ENCODE measurements at regions of chr14 and their contacts with region 1.

Region 1: GRCh38 chr14:65949711-65950516 is 536.3 kb upstream of the CCDC196 start:
- DNase-seq: peak in 6 of 14 experiments; percentile 12 to 56 (median 31)
- ATAC-seq: no peak
- H3K4me3 ChIP-seq: no peak overlapping the region
- H3K4me3 Mint-ChIP-seq: no peak overlapping the region
- H3K27ac ChIP-seq: no peak overlapping the region
- H3K27ac Mint-ChIP-seq: no peak overlapping the region
- H3K4me1 ChIP-seq: peaks cover 25% of the 10 kb centered on the region
- H3K4me1 Mint-ChIP-seq: peaks cover 32% of the 10 kb centered on the region
- H3K27me3 ChIP-seq: no peaks in the 10 kb centered on the region
- H3K27me3 Mint-ChIP-seq: no peaks in the 10 kb centered on the region
- CTCF ChIP-seq: no peak

Region 2: DNA sequence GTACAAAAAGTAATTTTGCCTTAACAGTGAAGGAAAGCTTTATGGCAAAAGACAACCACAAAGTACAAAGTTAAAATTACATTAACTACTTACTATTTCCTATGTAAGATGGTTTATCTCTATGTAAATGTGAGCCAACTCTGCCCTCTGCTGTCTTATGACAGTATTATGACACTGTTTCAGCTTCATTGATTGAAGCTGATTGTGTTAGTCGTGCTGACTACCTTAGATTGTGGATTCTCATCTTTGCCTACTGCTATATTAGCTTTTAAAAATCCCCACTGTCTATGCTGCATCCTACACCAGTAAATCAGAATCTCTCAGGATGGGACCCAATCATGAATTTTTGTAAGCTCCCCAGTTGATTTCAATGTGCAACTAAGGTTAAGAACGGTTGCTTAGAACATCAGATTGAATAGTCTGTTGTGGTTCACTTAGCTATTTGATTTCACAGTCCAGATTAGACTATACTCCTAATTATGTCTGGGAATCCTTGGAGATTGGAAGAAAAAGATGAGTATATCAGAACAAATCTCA is 1058.0 kb before region 1 on chr14:
- CTCF ChIA-PET with region 1: no interaction called
- POLR2A ChIA-PET with region 1: no interaction called
- intact Hi-C with region 1: no loop called
- DNase-seq: peak in 8 of 14 experiments; percentile 11 to 81 (median 37)
- ATAC-seq: peak; percentile 97
- H3K4me3 ChIP-seq: no peak overlapping the region
- H3K4me3 Mint-ChIP-seq: no peak overlapping the region
- H3K27ac ChIP-seq: no peak overlapping the region
- H3K27ac Mint-ChIP-seq: no peak overlapping the region
- H3K4me1 ChIP-seq: no peaks in the 10 kb centered on the region
- H3K4me1 Mint-ChIP-seq: peaks cover 5% of the 10 kb centered on the region
- H3K27me3 ChIP-seq: peaks cover 0 to 4% of the 10 kb centered on the region in 2 experiments
- H3K27me3 Mint-ChIP-seq: peaks cover 13% of the 10 kb centered on the region
- CTCF ChIP-seq: peak; percentile 72

Region 3: DNA sequence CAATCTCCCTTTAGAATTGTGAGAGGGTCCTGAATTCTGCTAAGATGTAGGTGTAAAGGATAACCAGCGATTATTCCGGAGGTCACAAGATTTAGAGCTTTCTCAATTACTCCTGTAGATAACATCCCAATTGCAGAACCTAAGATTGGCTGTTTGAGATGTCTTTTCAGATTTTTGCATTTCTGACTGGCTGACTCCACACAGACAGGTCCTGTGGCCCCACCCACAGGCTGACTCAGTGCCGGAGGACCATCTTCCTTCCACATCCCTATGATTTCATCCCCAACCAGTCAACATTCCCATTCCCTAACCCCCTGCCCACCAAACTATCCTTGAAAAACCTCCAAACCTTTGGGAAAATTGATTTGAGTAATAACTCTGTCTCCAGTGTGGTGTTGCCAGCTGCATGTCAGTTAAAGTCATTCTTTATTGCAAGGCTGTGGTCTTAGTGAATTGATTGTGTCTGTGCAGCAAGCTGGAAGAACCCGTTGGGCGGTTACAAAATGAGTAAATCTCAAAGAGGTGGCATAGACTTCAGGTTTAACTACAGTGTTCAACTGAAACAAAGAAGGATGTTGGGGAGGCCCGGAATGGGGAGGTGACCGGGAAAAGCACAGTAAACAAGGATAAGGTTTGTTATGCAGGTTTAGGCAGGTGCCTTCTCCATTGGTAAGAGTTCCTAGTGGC is 952.7 kb before region 1 on chr14:
- CTCF ChIA-PET with region 1: no interaction called
- POLR2A ChIA-PET with region 1: no interaction called
- intact Hi-C with region 1: loop called in 1 of 2 experiments (anchors 10 kb)
- DNase-seq: peak in 2 of 14 experiments; percentile 27 to 30
- ATAC-seq: peak; percentile 71
- H3K4me3 ChIP-seq: no peak overlapping the region
- H3K4me3 Mint-ChIP-seq: peak overlapping the region; percentile 9
- H3K27ac ChIP-seq: no peak overlapping the region
- H3K27ac Mint-ChIP-seq: no peak overlapping the region
- H3K4me1 ChIP-seq: peaks cover 4% of the 10 kb centered on the region
- H3K4me1 Mint-ChIP-seq: peaks cover 10% of the 10 kb centered on the region
- H3K27me3 ChIP-seq: no peaks in the 10 kb centered on the region
- H3K27me3 Mint-ChIP-seq: no peaks in the 10 kb centered on the region
- CTCF ChIP-seq: no peak

Region 4: GRCh38 chr14:67004521-67004920 is 1054.6 kb after region 1 on chr14:
- CTCF ChIA-PET with region 1: no interaction called
- POLR2A ChIA-PET with region 1: no interaction called
- intact Hi-C with region 1: no loop called
- DNase-seq: no peak
- ATAC-seq: no peak
- H3K4me3 ChIP-seq: no peak overlapping the region
- H3K4me3 Mint-ChIP-seq: no peak overlapping the region
- H3K27ac ChIP-seq: no peak overlapping the region
- H3K27ac Mint-ChIP-seq: no peak overlapping the region
- H3K4me1 ChIP-seq: no peaks in the 10 kb centered on the region
- H3K4me1 Mint-ChIP-seq: no peaks in the 10 kb centered on the region
- H3K27me3 ChIP-seq: no peaks in the 10 kb centered on the region
- H3K27me3 Mint-ChIP-seq: no peaks in the 10 kb centered on the region
- CTCF ChIP-seq: no peak

Measured in CD4-positive, alpha-beta T cell (primary cell).